ENCODE measurements at regions of chr5 and their contacts with region 1.

Region 1: DNA sequence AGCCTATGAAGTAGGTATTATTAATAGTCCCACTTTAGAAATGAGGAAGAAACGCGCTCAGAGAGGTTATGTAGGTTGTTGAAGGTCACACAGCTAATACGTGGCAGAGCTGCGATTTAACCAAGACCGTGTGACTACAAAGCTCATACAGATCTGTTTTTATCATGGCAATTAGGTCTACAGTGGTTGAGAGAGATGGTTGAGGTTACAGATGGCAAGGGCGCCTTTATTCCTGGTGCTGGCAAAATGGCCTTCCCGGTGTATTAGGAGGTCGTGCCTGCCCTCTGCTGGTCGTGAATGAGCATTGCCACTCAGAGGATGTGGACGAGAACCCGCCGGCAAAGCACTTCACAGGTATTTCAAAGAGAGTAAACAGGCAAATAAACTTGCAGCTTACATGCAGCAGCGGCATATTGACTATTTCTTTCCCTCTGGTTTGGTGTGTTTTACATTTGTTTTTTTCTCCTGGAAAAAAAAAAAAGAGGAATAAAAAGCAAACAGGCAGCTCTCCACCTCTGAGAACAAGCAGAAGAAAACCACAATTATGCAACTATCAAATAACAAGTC is 65.3 kb upstream of the EGFLAM start:
- DNase-seq: peak; percentile 69
- H3K4me3 Mint-ChIP-seq: no peak overlapping the region
- H3K27ac Mint-ChIP-seq: no peak overlapping the region
- H3K4me1 Mint-ChIP-seq: no peaks in the 10 kb centered on the region
- H3K27me3 Mint-ChIP-seq: peaks cover 45% of the 10 kb centered on the region
- CTCF ChIP-seq: peak; percentile 84

Region 2: DNA sequence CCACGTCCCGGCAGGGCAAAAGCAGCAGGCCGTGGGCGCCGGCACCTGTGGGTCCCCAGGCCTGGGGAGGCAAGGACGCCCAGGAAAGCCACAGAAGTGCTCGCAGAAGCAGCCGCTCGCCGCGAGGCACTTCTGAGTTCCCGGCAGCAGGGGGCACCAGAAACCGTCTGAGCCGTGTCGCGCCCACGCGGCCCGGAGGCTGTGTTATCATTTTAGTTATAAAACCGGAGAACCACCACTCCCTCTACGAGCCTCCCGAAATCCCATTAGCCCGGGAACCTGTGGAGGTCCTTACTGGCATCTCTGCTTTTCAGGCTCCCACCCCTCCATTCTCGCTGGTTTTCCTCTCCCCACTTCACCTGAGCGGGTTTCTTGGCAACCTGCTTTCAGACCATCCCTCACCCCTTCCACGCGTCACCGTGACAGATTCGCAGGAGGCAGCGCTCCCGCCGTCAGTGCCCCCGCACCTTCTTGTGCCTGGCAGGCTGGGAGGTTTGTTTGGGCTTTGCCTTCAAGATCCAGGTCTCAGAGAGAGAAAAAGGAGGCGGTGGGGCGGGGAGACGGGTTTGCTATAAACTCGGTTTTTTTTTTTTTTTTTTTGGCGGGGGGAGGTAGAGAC is 355.6 kb before region 1 on chr5:
- CTCF ChIA-PET with region 1: no interaction called
- intact Hi-C with region 1: loop called (anchors 1 kb)
- DNase-seq: peak; percentile 60
- H3K4me3 Mint-ChIP-seq: peak overlapping the region; percentile 47
- H3K27ac Mint-ChIP-seq: no peak overlapping the region
- H3K4me1 Mint-ChIP-seq: no peaks in the 10 kb centered on the region
- H3K27me3 Mint-ChIP-seq: peaks cover 78% of the 10 kb centered on the region
- CTCF ChIP-seq: peak; percentile 30

Region 3: DNA sequence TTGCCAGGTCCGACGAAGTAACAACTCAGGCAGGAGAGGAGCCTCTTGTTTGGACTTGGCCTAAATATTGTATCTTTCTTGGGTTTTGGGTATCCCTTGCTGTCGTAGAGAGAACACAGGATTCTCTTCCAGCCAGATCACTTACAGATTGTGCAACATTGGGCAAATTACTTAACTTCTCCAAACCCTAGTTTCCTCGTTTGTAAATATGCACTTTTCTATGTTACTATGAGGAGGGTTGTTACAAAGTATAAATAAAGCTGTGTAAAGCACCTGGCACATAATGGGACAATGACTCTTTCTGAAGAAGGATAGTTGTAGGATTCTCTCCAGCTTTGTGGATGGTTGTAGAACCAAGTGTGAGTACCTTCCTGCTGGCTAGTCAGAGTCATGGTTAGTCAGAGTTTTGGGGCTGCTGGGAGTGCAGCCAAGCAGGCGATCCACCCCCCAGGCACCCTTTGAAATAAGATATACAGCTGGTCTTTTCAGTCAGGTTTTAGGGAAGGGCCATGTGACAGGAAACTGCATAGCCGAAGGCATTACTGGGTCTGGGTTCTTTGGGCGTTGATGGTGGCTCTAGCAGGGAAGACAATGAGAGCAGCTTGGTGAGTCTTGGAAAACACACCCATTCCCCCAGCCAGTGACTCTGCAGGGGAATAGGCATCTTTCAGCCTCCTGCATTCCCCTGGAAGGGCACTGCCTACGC is 303.3 kb before region 1 on chr5:
- CTCF ChIA-PET with region 1: no interaction called
- intact Hi-C with region 1: loop called (anchors 10 kb)
- DNase-seq: no peak
- H3K4me3 Mint-ChIP-seq: no peak overlapping the region
- H3K27ac Mint-ChIP-seq: no peak overlapping the region
- H3K4me1 Mint-ChIP-seq: no peaks in the 10 kb centered on the region
- H3K27me3 Mint-ChIP-seq: peaks cover 86% of the 10 kb centered on the region
- CTCF ChIP-seq: no peak

Region 4: DNA sequence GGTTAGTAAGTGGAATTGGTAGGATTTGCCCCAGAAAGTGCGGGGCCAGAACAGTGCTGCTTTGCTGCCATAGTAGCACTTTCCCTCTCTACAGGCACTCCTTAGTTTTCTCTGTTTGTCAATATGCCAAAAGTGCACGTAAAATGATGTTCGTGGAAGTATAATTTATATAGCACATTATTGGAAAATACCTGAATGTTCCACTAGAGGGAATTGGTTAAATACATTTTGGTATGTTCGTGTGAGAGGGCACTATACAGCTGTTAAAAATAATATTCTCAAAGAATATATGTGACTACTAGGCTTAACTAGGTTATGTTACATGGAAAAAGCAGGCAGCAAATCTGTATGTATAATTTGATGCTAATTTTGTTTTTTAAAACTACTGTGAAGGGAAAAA is 169.3 kb before region 1 on chr5:
- CTCF ChIA-PET with region 1: interaction called, 5 read pairs
- intact Hi-C with region 1: loop called (anchors 1 kb)
- DNase-seq: no peak
- H3K4me3 Mint-ChIP-seq: no peak overlapping the region
- H3K27ac Mint-ChIP-seq: no peak overlapping the region
- H3K4me1 Mint-ChIP-seq: peaks cover 8% of the 10 kb centered on the region
- H3K27me3 Mint-ChIP-seq: peaks cover 21% of the 10 kb centered on the region
- CTCF ChIP-seq: peak; percentile 46

Region 5: GRCh38 chr5:38265546-38266179 is 72.6 kb after region 1 on chr5:
- CTCF ChIA-PET with region 1: no interaction called
- intact Hi-C with region 1: no loop called
- DNase-seq: peak; percentile 79
- H3K4me3 Mint-ChIP-seq: no peak overlapping the region
- H3K27ac Mint-ChIP-seq: no peak overlapping the region
- H3K4me1 Mint-ChIP-seq: no peaks in the 10 kb centered on the region
- H3K27me3 Mint-ChIP-seq: peaks cover 61% of the 10 kb centered on the region
- CTCF ChIP-seq: peak; percentile 75